ENCODE measurements at regions of chr1 and their contacts with region 1.

Region 1: GRCh38 chr1:156242738-156243137 is 754 bp downstream of the BGLAP start:
- DNase-seq: no peak
- H3K4me3 Mint-ChIP-seq: no peak overlapping the region
- H3K27ac Mint-ChIP-seq: no peak overlapping the region
- H3K4me1 Mint-ChIP-seq: peaks cover 14% of the 10 kb centered on the region
- H3K27me3 Mint-ChIP-seq: no peaks in the 10 kb centered on the region

Region 2: DNA sequence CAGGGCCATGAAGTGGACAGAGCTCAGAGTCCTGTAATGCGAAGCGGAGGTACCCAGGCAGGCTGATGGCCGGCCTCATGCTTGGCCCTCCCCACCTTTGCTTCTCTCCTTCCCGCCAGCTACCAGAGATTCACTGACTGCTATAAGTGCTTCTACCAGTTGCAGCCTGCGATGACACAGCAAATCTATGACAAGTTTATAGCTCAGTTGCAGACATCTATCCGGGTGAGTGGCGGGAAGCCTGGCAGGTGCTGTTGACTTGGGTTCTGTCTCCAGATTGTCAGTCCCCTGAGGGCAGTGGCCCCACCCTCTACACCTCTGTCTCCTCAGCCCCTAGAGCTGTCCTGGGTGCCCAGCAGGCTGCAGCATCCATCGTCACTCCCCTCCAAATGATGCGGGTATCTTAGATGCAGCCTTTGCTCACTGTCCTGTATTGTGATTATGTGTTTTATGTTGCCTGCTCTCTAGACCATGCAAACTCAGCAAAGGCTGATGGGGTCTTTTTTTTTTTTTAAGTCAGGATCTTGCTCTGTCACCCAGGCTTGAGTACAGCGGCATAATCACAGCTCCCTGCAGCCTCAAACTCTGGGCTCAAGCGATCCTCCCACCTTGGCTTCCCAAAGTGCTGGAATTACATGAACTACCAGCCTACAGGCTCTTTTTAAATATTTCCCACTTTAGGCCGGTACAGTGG is 10.4 kb before region 1 on chr1:
- intact Hi-C with region 1: loop called (anchors 1 kb)
- DNase-seq: no peak
- H3K4me3 Mint-ChIP-seq: no peak overlapping the region
- H3K27ac Mint-ChIP-seq: peak overlapping the region; percentile 53
- H3K4me1 Mint-ChIP-seq: peaks cover 14% of the 10 kb centered on the region
- H3K27me3 Mint-ChIP-seq: no peaks in the 10 kb centered on the region

Region 3: DNA sequence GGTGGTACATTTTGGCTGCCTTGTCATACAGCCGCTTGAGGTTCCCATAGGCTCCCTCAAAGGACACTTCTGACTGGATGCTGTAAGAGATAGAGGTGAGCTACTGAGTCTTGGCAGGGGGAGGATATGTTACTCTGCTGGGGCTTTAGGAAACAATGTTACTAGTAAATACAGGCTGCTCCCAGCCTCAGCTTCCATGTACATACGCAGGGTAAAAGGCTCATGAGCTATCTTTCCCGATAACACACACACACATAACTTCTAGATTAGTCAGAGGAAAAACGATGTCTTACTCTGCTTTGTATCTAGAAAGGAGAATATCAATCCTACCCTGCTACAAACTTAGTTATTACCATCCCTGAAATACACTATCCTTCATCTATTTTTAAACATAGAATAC is 25.6 kb after region 1 on chr1:
- intact Hi-C with region 1: no loop called
- DNase-seq: no peak
- H3K4me3 Mint-ChIP-seq: no peak overlapping the region
- H3K27ac Mint-ChIP-seq: no peak overlapping the region
- H3K4me1 Mint-ChIP-seq: peaks cover 4% of the 10 kb centered on the region
- H3K27me3 Mint-ChIP-seq: no peaks in the 10 kb centered on the region

Region 4: DNA sequence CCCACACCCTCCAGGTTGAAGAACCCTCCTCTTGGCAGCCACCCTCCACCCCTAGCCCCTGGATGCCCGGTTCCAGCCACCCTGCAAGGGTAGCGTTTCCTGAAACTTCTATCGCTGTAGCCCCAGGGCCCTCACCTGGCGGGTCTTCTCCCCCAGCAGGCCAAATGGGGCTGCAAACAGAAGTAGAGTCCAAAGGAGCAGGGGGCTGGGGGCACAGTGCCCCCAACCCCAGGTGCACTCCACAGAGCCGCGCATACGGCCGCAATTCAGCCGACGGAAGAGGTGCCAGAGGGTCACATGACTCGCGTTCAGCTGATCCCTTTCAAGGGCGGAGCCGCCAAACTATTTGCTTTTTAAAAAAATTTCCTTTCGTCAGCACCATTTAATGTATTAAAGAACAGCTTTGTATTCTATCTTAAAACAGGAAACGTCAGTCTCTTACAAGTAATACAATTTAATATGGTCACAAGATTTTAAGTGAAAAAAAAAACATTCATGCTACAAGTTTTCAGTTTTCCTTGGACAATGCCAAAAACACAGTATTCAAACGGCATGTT is 52.7 kb after region 1 on chr1 and contains the start of gene GLMP:
- intact Hi-C with region 1: no loop called
- DNase-seq: peak; percentile 88
- H3K4me3 Mint-ChIP-seq: peak within 1 kb of the TSS; percentile 93
- H3K27ac Mint-ChIP-seq: peak within 1 kb of the TSS; percentile 74
- H3K4me1 Mint-ChIP-seq: peaks cover 18% of the 10 kb centered on the region
- H3K27me3 Mint-ChIP-seq: no peaks in the 10 kb centered on the region
- total RNA-seq, gene GLMP: 15.7 and 16.9 TPM in 2 replicates

Region 5: DNA sequence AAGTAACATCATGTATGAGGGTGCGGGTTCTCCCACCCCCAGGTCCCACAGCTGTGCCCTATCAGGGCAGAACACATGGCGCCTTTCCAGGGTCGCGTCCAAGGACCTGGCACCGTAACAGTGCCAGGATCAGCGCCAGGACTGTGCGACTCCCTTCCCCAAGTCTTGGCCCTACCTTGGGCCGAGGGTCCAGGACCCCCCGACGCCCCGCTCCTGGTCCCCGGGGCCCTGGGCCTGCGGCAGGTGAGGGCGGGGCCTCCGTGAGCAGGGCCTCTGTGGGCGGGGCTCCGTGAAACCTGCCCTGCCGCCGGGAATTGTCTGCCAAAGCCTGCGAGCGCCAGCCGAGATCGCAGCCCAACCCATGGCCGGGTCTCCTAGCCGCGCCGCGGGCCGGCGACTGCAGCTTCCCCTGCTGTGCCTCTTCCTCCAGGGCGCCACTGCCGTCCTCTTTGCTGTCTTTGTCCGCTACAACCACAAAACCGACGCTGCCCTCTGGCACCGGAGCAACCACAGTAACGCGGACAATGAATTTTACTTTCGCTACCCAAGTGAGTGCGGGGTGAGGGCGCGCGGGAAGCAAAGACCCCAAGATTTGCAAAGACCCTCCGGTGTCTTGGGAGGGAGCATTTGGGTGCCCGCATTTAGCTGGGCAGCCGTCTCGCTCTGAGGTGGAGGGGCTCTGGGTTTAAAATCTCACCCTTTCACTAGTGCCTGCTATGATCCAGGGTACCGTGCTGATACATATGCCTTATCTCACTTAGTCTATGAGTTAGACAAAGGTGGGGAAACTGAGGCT is 126.3 kb after region 1 on chr1 and contains the start of gene RHBG:
- intact Hi-C with region 1: no loop called
- DNase-seq: no peak
- H3K4me3 Mint-ChIP-seq: peak within 1 kb of the TSS; percentile 37
- H3K27ac Mint-ChIP-seq: no peak within 1 kb of the TSS
- H3K4me1 Mint-ChIP-seq: peaks cover 6% of the 10 kb centered on the region
- H3K27me3 Mint-ChIP-seq: peaks cover 63% of the 10 kb centered on the region
- total RNA-seq, gene RHBG: not detected in 2 replicates

Measured in activated CD4-positive, alpha-beta T cell treated with anti-CD3 and anti-CD28 coated beads, Interleukin-2, amount 10 ng/mL, durations not matched to agents 24 days and 14 days (primary cell).